ENCODE measurements at regions of chr1 and their contacts with region 1.

Region 1: GRCh38 chr1:114581335-114582287 is at the start of gene BCAS2:
- DNase-seq: peak; percentile 99
- ATAC-seq: peak; percentile 99
- H3K4me3 ChIP-seq: peak within 1 kb of the TSS; percentile 75
- H3K27ac ChIP-seq: peak within 1 kb of the TSS; percentile 80
- H3K4me1 ChIP-seq: no peaks in the 10 kb centered on the region; the same call in 1 of the 2 replicates
- H3K27me3 ChIP-seq: no peaks in the 10 kb centered on the region
- CTCF ChIP-seq: no peak
- POLR2A ChIP-seq: peak; percentile 83
- RAD21 ChIP-seq: no peak
- total RNA-seq, gene BCAS2: 15.4 and 39.4 TPM in 2 replicates

Region 2: DNA sequence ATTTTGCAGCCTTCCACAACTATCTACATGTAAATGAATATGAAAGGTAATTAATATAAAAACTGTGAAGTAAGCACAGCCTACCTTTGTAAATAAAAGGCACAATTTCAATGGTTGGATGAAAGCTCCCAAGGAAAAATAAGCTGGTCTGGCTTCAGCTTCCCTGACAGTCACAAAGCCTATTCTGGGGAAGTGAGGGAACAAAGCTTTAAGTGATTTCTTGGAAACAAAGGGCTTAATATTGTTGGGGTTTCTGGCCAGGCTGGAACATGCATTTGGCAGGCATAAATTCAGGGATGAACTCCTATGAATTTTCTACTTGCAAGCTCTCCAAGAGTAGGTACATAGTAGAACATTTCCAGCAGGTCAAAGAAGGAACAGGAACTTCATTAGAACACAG is 17.5 kb before region 1 on chr1:
- CTCF ChIA-PET with region 1: no interaction called
- POLR2A ChIA-PET with region 1: interaction called, 11 read pairs
- dilution Hi-C with region 1: no loop called
- in situ Hi-C with region 1: no loop called
- intact Hi-C with region 1: no loop called
- DNase-seq: no peak
- ATAC-seq: no peak
- H3K4me3 ChIP-seq: no peak overlapping the region
- H3K27ac ChIP-seq: no peak overlapping the region
- H3K4me1 ChIP-seq: no peaks in the 10 kb centered on the region
- H3K27me3 ChIP-seq: no peaks in the 10 kb centered on the region
- CTCF ChIP-seq: no peak
- POLR2A ChIP-seq: no peak
- RAD21 ChIP-seq: no peak

Region 3: DNA sequence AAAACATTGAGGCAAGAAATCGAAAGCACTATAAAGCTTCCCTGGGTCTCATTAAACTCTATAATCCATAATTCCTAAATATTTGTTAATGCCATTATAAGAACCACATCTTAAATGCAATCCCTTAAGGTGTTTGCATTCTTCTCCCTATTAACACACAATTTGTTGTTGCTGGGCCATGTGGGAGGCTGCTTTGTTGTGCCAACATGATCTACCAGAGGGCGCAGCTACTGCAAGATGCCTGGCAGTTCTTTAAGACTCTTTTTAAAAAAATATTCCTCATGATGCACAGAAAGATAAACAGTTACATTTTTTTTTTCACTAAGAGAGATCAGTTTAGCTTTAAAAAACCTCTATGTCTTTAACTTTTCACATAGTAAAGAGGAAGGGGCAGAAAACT is 38.8 kb after region 1 on chr1:
- CTCF ChIA-PET with region 1: no interaction called
- POLR2A ChIA-PET with region 1: no interaction called
- dilution Hi-C with region 1: no loop called
- in situ Hi-C with region 1: no loop called
- intact Hi-C with region 1: loop called (anchors 5 kb)
- DNase-seq: no peak
- ATAC-seq: no peak
- H3K4me3 ChIP-seq: no peak overlapping the region
- H3K27ac ChIP-seq: no peak overlapping the region
- H3K4me1 ChIP-seq: no peaks in the 10 kb centered on the region
- H3K27me3 ChIP-seq: no peaks in the 10 kb centered on the region
- CTCF ChIP-seq: no peak
- POLR2A ChIP-seq: no peak
- RAD21 ChIP-seq: no peak

Region 4: DNA sequence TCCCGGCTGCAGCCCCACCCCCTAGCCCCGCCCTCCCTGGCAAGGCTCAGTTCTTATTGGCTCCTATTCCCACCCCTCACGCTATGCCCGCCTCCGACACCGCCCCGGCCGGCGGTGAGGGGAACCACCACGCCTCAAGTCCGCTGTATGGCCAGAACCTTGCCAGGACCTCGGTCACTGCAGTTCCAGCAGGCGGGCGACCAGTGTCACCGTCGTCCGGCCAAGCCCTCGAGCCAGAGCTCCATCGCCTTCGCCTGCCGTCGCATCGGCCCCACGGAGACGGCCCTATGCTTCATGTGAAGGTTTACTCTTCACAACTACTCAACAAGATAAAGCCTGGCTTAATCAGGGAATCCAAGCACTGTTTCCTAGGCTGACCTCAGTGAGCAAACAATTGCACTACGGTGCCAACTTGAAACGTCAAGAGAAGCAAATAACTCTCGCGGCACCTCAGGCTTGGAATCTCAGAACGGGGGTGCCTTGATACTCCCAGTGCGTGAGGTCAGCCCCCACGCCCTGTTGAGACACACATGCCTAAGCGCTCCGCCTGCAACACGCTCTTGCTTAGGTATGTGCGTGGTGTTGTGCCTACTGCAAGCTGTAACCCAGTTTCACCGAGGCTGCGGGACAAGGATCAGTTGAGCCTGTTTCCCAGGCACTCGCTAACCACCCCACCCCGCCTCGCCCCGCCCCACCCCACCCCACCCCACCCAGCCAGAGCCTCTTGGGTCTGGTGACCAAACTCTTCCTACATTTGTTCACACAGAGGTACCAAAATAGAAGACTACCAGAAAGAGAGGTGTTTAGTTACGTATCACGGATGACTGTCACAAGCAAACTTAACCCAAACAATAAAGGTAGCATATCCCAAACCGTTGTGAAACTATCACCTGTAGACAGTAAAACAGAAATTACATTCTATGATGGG is 88.7 kb after region 1 on chr1:
- CTCF ChIA-PET with region 1: no interaction called
- POLR2A ChIA-PET with region 1: no interaction called
- dilution Hi-C with region 1: no loop called
- in situ Hi-C with region 1: no loop called
- intact Hi-C with region 1: loop called (anchors 2 kb)
- DNase-seq: peak; percentile 80
- ATAC-seq: peak; percentile 99
- H3K4me3 ChIP-seq: peak overlapping the region; percentile 92
- H3K27ac ChIP-seq: no peak overlapping the region
- H3K4me1 ChIP-seq: no peaks in the 10 kb centered on the region
- H3K27me3 ChIP-seq: peaks cover 5% of the 10 kb centered on the region
- CTCF ChIP-seq: no peak
- POLR2A ChIP-seq: peak; percentile 59; the same call in 1 of the 2 replicates
- RAD21 ChIP-seq: no peak

Region 5: GRCh38 chr1:114716304-114717170 is 134.9 kb after region 1 on chr1 and contains the start of gene NRAS:
- CTCF ChIA-PET with region 1: no interaction called
- POLR2A ChIA-PET with region 1: no interaction called
- dilution Hi-C with region 1: no loop called
- in situ Hi-C with region 1: no loop called
- intact Hi-C with region 1: loop called (anchors 5 kb)
- DNase-seq: peak; percentile 91
- ATAC-seq: peak; percentile 91
- H3K4me3 ChIP-seq: peak within 1 kb of the TSS; percentile 86
- H3K27ac ChIP-seq: peak within 1 kb of the TSS; percentile 96
- H3K4me1 ChIP-seq: no peaks in the 10 kb centered on the region
- H3K27me3 ChIP-seq: no peaks in the 10 kb centered on the region
- CTCF ChIP-seq: no peak
- POLR2A ChIP-seq: peak; percentile 74
- RAD21 ChIP-seq: no peak
- total RNA-seq, gene NRAS: 85.9 and 110 TPM in 2 replicates